ENCODE measurements at regions of chr5 and their contacts with region 1.

Region 1: GRCh38 chr5:160508780-160509361 is 87.2 kb downstream of the PTTG1 start:
- DNase-seq: peak; percentile 70
- H3K4me3 Mint-ChIP-seq: peak overlapping the region; percentile 14
- H3K27ac Mint-ChIP-seq: peak overlapping the region; percentile 81
- H3K4me1 Mint-ChIP-seq: peaks cover 59% of the 10 kb centered on the region
- H3K27me3 Mint-ChIP-seq: no peaks in the 10 kb centered on the region

Region 2: DNA sequence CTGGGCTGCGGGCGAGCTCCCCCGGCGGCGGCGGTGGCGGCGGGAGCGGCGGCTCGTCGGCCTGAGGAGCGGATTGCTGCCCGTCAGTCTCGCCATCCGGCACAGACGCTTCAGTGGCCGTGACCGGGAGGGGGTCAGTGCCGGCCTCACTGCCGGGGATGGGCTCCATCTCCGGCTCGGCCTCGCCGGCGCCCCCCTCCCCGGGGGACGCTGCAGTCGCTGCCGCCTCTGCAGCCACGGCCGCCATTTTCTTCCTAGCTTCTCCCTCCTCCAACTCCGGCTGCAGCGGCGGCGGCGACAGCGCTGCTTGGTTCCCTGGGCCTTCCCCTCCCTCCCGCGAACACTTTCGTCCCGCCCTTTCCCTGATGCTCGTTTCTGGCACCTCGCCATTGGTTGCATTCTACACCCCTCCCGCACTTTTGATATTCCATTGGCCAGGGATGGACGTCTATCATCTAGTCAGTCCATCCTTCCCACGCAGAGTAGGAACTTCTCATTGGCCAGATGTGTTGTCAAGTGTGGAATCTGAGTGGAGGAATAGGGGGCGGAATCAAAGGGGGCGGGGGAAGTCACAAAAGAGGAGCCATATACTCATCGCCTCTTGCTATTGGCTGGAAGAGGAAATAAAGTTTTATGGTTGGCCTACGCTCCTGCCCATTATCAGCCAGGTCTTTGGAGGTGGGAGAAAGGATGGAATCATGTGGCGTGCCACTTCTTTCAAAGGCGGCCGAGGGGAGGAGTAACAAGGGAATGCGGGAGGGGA is 389.5 kb before region 1 on chr5 and contains the start of gene PWWP2A:
- intact Hi-C with region 1: loop called (anchors 2 kb)
- DNase-seq: peak; percentile 96
- H3K4me3 Mint-ChIP-seq: peak within 1 kb of the TSS; percentile 94
- H3K27ac Mint-ChIP-seq: peak within 1 kb of the TSS; percentile 94
- H3K4me1 Mint-ChIP-seq: peaks cover 13% of the 10 kb centered on the region
- H3K27me3 Mint-ChIP-seq: peaks cover 3% of the 10 kb centered on the region
- total RNA-seq, gene PWWP2A: 20.4 and 22.7 TPM in 2 replicates

Region 3: DNA sequence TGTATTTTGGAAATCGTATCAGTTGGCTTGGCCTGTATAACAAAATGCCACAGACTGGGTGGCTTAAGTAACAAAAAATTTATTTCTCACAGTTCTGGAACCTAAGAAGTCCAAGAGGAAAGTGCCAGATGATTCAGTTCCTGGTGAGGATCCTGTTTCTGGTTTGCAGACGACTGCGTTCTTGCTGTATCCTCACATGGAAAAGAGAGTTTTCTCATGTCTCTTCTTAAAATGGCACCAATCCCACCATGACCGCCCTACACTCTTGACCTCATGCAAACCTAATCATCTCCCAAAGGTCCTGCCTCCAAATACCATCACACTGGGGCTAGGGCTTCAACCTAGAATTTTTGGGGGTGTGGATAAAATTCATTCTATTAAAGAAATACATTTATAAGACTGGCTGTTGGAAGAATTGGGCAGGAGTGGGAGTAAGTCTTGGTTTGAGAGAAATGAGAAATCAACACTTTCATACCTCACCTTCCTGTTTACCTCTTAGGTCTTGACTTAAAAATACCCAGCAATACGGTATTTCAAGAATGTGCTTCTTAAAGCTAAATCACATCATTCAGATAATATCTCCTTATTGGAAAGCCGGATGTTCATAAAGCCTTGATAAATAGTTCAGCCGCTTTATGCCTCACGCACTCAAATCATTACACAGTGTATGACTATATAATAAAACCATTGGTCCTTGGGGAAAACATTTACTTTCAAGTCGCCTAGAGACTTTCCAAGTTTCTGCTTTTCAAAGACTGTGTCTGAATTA is 58.5 kb before region 1 on chr5:
- intact Hi-C with region 1: no loop called
- DNase-seq: no peak
- H3K4me3 Mint-ChIP-seq: no peak overlapping the region
- H3K27ac Mint-ChIP-seq: no peak overlapping the region
- H3K4me1 Mint-ChIP-seq: peaks cover 40% of the 10 kb centered on the region
- H3K27me3 Mint-ChIP-seq: no peaks in the 10 kb centered on the region

Region 4: DNA sequence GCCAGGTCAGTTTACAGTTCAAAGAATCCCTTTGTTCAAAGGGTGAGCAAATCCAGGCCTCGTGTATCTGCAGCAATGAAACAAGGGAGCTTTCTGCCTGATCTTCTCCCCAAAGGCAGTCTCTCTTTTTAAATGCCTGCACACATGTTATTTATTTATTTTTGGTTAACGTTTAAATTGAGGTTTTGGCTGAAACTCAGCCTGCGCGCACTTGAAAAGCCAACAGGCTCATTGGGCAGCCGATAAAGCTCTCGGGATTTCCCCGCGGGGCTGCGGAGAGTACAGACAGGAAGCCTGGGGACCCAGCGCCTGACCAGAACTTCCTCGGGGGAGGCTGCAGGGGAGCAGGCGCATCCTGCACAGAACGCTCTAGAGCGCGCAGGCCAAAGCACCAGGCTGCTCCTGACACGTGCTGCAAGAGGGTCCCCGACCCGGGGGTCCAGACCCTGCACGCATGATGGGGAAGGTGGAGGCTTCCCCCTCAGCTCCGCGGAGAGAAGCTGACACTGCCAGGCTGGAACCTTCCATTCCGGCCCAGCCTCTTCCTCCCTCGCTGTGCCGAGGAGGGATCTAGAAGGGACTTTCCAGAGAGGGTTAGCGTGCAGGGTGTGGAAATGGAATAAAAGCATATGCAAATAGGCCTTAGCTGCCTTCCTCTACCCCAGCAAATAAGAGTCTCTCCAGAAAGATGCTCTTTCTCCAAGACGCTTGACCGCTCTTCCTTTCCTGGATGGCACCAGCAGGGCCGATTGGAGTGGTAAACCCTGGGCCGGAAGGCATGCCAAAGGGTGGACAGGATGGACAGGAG is 41.1 kb before region 1 on chr5:
- intact Hi-C with region 1: loop called (anchors 1 kb)
- DNase-seq: peak; percentile 84
- H3K4me3 Mint-ChIP-seq: peak overlapping the region; percentile 96
- H3K27ac Mint-ChIP-seq: peak overlapping the region; percentile 99
- H3K4me1 Mint-ChIP-seq: peaks cover 67% of the 10 kb centered on the region
- H3K27me3 Mint-ChIP-seq: no peaks in the 10 kb centered on the region

Region 5: DNA sequence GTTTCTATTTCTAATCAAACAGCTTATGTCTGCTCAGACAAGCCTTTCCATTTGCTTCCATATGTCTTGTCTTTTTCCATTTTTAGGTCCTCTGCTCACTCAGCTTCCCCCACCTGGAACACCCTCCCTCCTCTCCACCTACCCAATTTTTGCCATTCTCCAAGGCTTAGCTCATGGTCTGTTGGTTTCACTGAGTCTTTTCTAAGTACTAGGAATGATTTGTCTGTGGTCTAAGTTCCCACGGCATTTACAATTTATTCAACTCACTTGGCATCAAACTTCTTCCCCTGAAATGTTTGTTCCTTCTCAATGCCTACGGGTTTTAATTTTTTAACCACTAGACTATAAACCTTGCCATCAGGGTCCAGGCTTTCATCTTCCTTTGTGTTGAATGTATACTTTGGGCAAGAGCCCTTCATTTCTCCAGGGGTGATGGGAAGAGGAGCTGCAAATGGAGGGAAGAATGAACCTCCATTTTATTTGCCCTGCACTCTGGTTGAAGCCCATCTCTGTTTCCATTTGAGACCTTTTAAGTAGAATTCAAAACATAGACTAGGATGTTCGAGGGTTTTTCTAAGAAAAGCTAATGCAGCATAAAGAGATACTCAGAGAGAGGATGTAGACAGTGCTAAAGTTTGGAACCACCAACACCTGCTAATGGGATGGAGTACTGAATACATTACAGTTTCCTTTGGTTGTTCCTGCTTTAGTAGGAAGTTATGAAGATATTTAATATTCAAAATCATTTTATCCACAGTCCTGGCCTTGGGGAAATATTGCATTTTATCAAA is 16.8 kb after region 1 on chr5:
- intact Hi-C with region 1: loop called (anchors 2 kb)
- DNase-seq: no peak
- H3K4me3 Mint-ChIP-seq: no peak overlapping the region
- H3K27ac Mint-ChIP-seq: peak overlapping the region; percentile 71
- H3K4me1 Mint-ChIP-seq: peaks cover 27% of the 10 kb centered on the region
- H3K27me3 Mint-ChIP-seq: no peaks in the 10 kb centered on the region

Region 6: DNA sequence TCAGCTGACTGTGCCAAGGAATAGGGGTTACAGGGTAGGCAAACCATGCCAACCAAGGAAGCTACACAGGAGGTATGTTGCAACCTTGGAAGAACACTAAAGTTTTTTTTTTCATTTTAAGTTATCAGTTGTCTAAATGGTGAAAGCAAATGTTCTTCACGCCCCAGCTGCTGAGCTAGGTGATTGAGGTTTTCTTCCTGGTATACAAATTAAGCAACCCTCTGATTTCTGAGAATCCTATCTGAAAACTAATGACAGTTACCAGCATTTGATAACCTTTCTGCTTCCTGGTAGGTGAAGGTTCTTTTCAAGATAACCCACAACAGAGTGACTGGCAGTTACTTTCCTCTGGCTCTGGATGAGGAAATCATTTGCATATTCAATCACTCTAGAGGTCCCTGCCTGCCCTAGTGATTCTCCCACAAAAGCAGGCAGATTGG is 148.2 kb after region 1 on chr5:
- intact Hi-C with region 1: loop called (anchors 2 kb)
- DNase-seq: no peak
- H3K4me3 Mint-ChIP-seq: no peak overlapping the region
- H3K27ac Mint-ChIP-seq: peak overlapping the region; percentile 24
- H3K4me1 Mint-ChIP-seq: peaks cover 21% of the 10 kb centered on the region
- H3K27me3 Mint-ChIP-seq: no peaks in the 10 kb centered on the region

Region 7: DNA sequence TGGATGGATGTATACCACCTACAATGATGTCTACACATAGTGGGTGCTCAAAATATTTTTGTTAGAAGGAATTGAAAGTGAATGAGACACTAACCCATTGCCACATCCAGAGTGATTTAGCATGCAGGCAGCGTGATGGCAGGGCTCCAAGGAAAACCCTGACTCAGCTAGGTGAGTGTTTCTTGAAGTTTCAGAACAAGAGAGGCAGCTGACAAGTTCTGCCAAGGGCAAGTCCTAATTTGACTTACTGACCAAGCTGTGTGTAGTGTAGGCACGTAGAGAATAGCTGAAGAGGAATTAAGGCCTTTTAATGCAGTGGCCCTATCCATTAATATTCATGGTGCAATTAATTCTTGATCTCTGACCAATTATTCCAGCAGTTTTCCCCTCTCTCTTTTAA is 450.9 kb after region 1 on chr5:
- intact Hi-C with region 1: loop called (anchors 10 kb)
- DNase-seq: no peak
- H3K4me3 Mint-ChIP-seq: no peak overlapping the region
- H3K27ac Mint-ChIP-seq: no peak overlapping the region
- H3K4me1 Mint-ChIP-seq: peaks cover 2% of the 10 kb centered on the region
- H3K27me3 Mint-ChIP-seq: peaks cover 1% of the 10 kb centered on the region